Posterior vena cava (tissue), 2 donors: ENCODE measurements at regions of chr2 and their contacts with region 1.

Region 1: GRCh38 chr2:231436957-231437356 is 27.3 kb downstream of the NCL start:
- DNase-seq: no peak

Region 2: DNA sequence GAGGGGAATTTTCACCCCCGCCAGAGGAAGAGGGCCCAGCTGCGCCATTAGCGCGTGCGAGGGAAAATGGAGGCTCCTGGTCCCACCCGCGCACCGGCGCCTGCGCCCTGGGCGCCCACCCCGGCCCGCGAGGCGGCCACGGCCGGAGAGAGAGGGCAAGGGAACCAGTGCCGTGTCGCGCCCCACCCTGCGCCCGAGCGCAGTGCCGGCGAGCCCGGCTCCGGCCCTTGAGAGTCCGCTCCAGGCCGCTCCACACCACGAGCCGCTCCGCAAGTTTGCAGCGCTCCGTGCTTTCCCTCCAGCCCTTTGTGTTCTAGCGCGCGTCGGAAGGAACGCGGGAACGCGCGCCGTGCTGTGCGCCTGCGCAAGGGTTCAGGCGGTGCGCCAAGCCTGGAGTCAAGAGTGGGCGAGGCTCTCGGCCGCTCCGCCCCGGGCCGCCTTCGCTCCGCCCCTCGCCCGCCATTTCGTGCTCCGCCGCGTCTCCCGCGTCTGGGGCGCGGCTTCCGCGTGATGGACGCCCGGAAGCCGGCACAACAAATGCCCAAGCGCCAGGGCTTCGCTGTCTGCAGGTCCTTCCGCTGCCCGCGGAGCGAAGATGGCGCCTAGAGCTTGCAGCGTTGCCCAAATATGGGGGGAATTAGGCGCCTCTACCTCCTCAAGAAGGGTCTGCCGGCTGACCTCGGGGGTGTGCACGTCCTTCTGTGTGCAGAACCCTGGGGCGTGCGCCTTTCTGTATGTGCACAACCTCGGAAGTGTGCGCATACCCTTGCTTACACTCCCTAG is 225.3 kb after region 1 on chr2:
- intact Hi-C with region 1: no loop called
- DNase-seq: peak; percentile 99

Region 3: DNA sequence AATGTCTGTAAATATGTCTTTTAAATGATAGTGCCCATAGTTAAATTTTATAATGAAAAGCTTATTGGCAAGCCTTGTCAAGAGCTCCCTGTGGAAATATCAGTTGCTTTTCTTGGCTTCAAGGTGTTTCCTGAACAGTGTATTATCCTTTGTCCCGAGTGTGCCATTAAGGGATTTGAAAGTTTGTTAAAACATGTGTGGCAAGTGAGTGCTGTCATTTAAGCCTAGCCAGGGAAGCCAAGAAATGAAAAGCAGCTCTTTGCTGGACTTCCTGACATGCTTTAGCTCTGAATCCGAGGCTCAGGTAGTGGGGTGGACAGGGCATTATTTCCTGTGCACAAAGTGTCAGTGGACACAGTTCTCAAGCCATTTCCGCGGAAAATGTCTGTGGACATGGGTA is 636.1 kb after region 1 on chr2:
- intact Hi-C with region 1: loop called in 1 of 2 experiments (anchors 5 kb)
- DNase-seq: no peak